Activated CD4-positive, alpha-beta T cell treated with anti-CD3 and anti-CD28 coated beads, Interleukin-2, amount 10 ng/mL, durations not matched to agents 24 days and 14 days (primary cell): ENCODE measurements at regions of chr2 and their contacts with region 1.

Region 1: DNA sequence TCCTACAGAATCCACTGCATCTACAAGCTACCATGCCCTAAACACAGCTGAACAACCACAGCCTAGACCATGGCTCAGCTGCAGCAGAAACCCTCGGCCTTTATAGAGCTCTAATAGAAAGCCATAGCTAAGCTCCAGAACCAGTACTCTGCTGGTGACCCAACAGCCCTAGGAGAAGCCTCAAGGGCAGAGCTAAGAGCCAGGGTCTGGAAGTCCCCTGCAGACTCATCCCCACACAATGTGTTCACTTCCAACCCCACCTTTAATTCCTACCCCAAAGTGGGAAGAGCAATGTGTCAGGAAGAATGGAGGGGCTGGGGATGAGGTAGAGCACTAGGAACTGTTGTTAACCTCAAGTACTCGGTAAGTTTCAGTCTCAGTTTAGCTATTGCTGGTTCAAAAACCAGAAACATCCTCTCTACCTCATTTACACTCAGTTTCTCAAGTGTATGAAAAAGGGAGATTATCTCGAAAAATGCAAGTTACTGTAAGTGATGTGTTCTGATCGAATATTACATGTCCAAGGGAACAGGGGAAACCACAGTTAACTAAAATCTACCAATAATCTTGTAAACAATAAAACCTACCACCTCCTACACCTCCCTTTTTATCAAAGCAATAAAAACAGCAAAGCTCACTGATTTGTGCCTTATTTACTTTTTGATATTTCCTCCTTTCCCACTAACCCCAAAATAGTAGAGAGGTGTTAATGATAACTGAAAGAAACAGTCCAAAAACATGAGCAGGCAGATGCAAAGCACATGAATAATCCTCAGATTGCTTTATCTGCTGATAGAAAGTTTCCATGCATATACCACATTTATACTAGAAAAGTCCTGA is 36.2 kb downstream of the THADA start:
- DNase-seq: peak; percentile 68
- H3K4me3 Mint-ChIP-seq: peak overlapping the region; percentile 62
- H3K27ac Mint-ChIP-seq: peak overlapping the region; percentile 96
- H3K4me1 Mint-ChIP-seq: peaks cover 52% of the 10 kb centered on the region
- H3K27me3 Mint-ChIP-seq: no peaks in the 10 kb centered on the region

Region 2: DNA sequence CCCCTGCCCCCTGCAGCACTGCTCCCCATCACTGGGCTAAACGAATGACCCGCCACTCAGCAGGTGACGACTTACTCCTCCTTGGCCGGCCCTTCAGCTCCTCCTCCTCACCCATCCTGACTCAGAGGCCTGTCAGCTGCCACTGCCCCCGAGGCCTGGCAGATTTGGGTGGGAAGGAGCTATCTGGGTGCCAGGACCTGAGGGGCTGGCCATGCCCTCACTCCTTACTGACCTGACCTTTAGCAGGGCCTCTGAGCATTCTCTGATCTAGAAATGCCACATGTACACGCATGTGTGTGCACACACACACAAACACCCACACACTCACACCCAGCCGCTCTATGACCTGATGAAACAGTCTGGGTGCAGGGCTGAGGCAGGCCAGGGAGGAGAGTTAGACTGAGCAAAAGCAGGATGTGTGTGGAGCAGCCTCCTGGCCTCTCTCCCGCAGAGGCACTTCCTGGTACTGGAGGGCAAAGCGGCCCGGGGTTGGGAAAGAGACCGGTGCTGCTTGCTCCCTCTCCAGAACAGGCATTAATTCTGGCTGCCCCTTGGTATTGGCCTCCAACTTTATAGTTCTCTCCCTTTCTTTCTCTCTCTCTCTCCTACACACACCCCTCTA is 401.2 kb before region 1 on chr2:
- intact Hi-C with region 1: loop called (anchors 5 kb)
- DNase-seq: peak; percentile 89
- H3K4me3 Mint-ChIP-seq: peak overlapping the region; percentile 78
- H3K27ac Mint-ChIP-seq: peak overlapping the region; percentile 98
- H3K4me1 Mint-ChIP-seq: peaks cover 56% of the 10 kb centered on the region
- H3K27me3 Mint-ChIP-seq: no peaks in the 10 kb centered on the region

Region 3: GRCh38 chr2:43426305-43427031 is 133.1 kb before region 1 on chr2:
- intact Hi-C with region 1: loop called (anchors 1 kb)
- DNase-seq: peak; percentile 93
- H3K4me3 Mint-ChIP-seq: peak overlapping the region; percentile 25
- H3K27ac Mint-ChIP-seq: peak overlapping the region; percentile 49
- H3K4me1 Mint-ChIP-seq: peaks cover 41% of the 10 kb centered on the region
- H3K27me3 Mint-ChIP-seq: peaks cover 4% of the 10 kb centered on the region

Region 4: DNA sequence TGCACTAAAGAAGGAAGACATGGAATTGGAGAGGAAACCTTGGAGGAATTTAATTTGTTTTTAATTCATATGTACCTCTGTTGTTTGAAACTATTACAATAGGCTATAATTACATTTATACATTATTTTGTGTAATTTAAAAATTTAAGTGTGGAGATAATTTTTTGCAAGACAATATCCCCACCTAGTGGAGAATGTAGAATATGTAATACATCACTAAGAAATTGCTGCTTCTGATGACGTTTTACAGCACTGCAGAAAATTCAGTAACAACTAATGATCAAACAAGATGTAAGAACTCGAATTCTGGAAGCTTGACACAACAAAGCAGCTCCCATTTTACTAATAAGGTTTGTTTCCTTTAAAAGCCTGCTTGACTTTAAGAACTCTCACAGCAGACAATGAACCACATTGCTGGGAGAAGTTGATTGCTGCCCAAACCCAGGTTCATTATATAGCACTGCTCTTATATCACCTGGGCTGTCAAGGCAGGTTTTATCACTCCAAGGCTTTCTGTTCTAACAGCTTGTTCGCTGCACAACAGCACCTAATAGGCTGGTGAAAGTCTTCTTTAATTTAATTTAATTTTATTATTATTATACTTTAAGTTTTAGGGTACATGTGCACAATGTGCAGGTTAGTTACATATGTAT is 17.2 kb before region 1 on chr2:
- intact Hi-C with region 1: loop called (anchors 2 kb)
- DNase-seq: peak; percentile 56
- H3K4me3 Mint-ChIP-seq: no peak overlapping the region
- H3K27ac Mint-ChIP-seq: no peak overlapping the region
- H3K4me1 Mint-ChIP-seq: peaks cover 8% of the 10 kb centered on the region
- H3K27me3 Mint-ChIP-seq: no peaks in the 10 kb centered on the region

Region 5: DNA sequence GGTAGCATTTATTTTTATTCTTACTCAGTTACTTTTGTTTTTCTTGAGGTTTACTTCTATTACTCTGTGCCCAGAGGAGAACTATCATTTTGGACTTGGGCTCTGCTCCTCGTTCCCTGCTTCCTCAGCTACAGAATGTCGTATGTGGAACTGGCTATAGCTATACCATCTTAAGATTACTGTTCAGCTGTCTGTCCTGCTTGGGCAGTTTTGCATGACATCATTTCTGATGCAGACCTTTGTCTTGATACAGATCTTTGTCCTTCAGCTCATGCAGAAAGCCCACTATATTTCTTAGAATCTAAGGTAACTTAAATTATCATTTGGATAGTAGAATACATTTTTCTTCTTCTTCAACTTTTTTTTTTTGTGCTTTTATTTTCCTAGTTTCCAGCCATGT is 130.4 kb after region 1 on chr2:
- intact Hi-C with region 1: no loop called
- DNase-seq: no peak
- H3K4me3 Mint-ChIP-seq: no peak overlapping the region
- H3K27ac Mint-ChIP-seq: no peak overlapping the region
- H3K4me1 Mint-ChIP-seq: no peaks in the 10 kb centered on the region
- H3K27me3 Mint-ChIP-seq: peaks cover 4% of the 10 kb centered on the region

Region 6: GRCh38 chr2:43934567-43934966 is 375.0 kb after region 1 on chr2:
- intact Hi-C with region 1: loop called (anchors 1 kb)
- DNase-seq: no peak
- H3K4me3 Mint-ChIP-seq: no peak overlapping the region
- H3K27ac Mint-ChIP-seq: peak overlapping the region; percentile 71
- H3K4me1 Mint-ChIP-seq: peaks cover 8% of the 10 kb centered on the region
- H3K27me3 Mint-ChIP-seq: no peaks in the 10 kb centered on the region